Heart right ventricle (tissue), 16 donors: ENCODE measurements at regions of chr2 and their contacts with region 1.

Region 1: DNA sequence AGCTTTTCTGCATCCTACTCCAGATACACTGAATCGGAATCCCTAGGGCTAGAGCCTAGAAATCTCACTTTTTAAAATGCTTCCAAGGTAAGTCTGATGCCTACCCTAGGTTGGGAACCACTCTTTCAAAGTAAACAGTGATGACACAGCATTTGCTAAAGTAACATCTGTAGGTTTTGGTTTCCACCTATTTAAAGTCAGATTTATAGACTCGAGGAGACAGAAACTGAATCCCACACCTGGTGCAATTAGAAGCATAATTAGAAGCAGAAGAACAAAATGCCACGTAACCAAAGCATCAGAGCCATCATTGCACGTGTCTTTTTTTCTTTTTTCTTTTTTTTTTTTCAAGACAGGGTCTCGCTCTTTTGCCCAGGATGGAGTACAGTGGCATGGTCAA is 40.9 kb downstream of the PDK1 start:
- DNase-seq: no peak
- ATAC-seq: no peak
- H3K4me3 ChIP-seq: no peak overlapping the region
- H3K27ac ChIP-seq: no peak overlapping the region
- H3K4me1 ChIP-seq: peaks cover 0 to 38% (median 9%) of the 10 kb centered on the region in 9 donors
- H3K27me3 ChIP-seq: no peaks in the 10 kb centered on the region
- CTCF ChIP-seq: no peak

Region 2: DNA sequence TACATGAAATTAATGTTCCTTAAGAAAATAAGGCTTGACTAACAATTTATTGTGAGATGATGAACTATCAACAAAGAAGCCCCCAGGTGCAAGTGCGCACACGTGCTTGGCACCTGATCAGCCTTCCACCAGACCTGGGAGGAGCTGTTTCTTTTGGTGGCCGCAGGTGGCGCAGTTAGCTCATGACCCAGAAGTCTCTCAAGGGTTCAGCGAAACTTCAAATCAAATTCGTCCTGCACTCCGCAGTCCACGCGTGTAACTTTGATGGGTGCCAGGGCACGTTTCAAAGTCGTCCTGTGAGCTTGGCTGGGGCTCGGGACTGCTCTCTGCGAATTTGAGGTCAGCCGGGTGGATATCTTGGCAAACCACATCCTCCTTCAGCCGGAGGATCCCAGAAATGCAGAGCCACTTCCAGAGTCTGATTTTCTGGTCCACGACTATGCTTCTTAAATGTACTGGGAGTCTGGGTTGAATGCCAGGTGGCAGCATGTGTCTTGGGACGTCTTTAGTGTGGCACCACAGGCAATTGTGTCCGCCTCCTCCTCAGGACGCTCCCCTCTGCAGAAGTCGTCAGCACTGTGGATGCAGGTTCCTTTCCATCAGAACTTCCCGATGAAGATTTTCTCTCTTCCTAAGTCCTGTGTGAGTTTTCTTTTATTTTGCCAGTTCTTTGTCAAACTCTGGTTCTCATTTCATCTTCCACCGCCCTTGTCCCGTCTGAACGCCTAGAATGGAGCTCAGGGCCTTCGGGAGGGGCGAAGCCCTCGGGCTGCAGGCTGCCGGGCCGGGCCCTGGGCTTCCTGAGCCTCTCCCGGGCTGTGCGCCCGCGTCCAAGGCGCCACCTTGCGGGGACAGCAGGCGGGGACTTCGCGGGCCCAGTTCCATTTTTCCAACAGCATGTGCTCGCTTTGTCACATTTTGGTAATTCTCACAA is 77.5 kb after region 1 on chr2:
- intact Hi-C with region 1: loop called in 5 of 10 experiments (anchors 5 to 10 kb)
- DNase-seq: peak; percentile 16 to 55
- ATAC-seq: peak; percentile 64 to 89 (median 79)
- H3K4me3 ChIP-seq: peak overlapping the region in 3 of 10 donors; percentile 5 to 14 (median 10)
- H3K27ac ChIP-seq: no peak overlapping the region
- H3K4me1 ChIP-seq: peaks cover 0 to 4% (median 0%) of the 10 kb centered on the region in 9 donors
- H3K27me3 ChIP-seq: no peaks in the 10 kb centered on the region
- CTCF ChIP-seq: peak; percentile 38 to 74 (median 58)

Region 3: DNA sequence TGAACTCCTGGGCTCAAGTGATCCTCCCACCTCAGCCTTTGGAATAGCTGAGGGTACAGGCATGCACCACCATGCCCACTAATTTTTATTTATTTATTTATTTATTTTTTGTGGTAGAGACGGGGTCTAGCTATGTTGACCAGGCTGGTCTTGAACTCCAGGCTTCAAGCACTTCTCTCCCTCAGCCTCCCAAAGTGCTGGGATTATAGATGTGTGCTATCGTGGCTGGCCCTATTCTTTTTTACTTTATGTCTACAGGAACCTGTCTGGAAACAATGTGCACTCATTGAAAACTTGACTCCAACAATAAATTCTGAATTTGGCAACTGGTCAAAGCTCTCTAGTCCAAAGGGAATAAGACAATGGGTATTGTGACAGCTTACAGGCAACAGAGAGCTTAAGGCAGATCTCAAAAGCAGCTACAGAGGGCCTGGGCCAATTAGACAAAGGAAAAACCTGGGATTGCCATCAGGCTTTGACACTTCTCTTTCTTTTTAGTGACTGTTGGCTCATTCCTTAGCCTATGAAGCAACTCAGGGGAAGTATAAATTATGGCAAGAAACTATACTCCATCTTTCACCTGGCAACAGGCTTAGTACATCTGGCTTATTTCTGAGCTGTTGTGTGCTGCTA is 83.8 kb after region 1 on chr2:
- intact Hi-C with region 1: loop called in 4 of 10 experiments (anchors 5 to 10 kb)
- DNase-seq: peak in 1 of 2 donors; percentile 13
- ATAC-seq: peak; percentile 25 to 95 (median 88)
- H3K4me3 ChIP-seq: no peak overlapping the region
- H3K27ac ChIP-seq: no peak overlapping the region
- H3K4me1 ChIP-seq: peaks cover 0 to 3% (median 0%) of the 10 kb centered on the region in 9 donors
- H3K27me3 ChIP-seq: no peaks in the 10 kb centered on the region
- CTCF ChIP-seq: no peak

Region 4: GRCh38 chr2:172704072-172704936 is 107.5 kb after region 1 on chr2:
- intact Hi-C with region 1: loop called in 5 of 10 experiments (anchors 5 to 10 kb)
- DNase-seq: no peak
- ATAC-seq: peak in 5 of 8 donors; percentile 43 to 65 (median 60)
- H3K4me3 ChIP-seq: no peak overlapping the region
- H3K27ac ChIP-seq: no peak overlapping the region
- H3K4me1 ChIP-seq: no peaks in the 10 kb centered on the region
- H3K27me3 ChIP-seq: peaks cover 0 to 23% (median 3%) of the 10 kb centered on the region in 7 donors
- CTCF ChIP-seq: peak; percentile 21 to 63 (median 54)

Region 5: GRCh38 chr2:172710584-172711024 is 113.8 kb after region 1 on chr2:
- intact Hi-C with region 1: loop called in 8 of 10 experiments (anchors 2 to 10 kb)
- DNase-seq: no peak
- ATAC-seq: peak; percentile 23 to 87 (median 72)
- H3K4me3 ChIP-seq: no peak overlapping the region
- H3K27ac ChIP-seq: peak overlapping the region in 6 of 10 donors; percentile 3 to 79 (median 62)
- H3K4me1 ChIP-seq: peaks cover 0 to 21% (median 6%) of the 10 kb centered on the region in 9 donors
- H3K27me3 ChIP-seq: peaks cover 0 to 26% (median 3%) of the 10 kb centered on the region in 7 donors
- CTCF ChIP-seq: peak in 8 of 9 donors; percentile 30 to 75 (median 64)

Region 6: DNA sequence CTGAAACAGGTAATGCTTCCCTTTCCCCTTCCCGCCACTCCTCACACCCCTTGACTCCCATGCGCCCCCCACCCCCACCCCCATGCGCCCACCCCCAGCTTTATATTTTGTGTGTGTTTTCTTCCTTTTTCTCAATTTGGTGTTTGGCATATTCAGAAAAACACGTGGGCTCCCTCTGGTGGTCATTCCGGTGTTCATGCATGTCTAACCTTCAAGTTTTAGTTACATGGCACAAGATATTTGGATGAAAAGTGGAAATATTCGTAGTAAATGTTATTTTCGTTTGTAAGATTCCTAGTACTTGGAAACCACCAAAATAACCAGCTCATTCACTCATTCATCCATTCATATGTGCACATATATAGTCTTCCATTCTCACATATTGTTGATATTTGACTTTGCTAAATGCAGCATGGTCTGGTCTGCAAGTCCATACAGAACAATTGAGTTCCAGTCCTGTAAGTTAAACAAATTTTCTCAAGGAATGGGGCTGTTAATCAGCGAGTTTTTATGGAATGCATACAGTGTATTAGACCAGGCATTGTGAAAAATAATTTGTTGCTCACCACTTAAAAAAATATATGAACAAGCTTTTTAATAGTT is 335.2 kb after region 1 on chr2:
- intact Hi-C with region 1: loop called in 1 of 10 experiments (anchors 10 kb)
- DNase-seq: peak; percentile 52 to 79
- ATAC-seq: peak in 7 of 8 donors; percentile 30 to 75 (median 37)
- H3K4me3 ChIP-seq: peak overlapping the region in 6 of 10 donors; percentile 3 to 33 (median 26)
- H3K27ac ChIP-seq: peak overlapping the region in 9 of 10 donors; percentile 2 to 82 (median 63)
- H3K4me1 ChIP-seq: peaks cover 3 to 49% (median 40%) of the 10 kb centered on the region in 9 donors
- H3K27me3 ChIP-seq: no peaks in the 10 kb centered on the region
- CTCF ChIP-seq: peak; percentile 65 to 82 (median 74)